Activated T-helper 1 cell treated with anti-CD3 and anti-CD28 coated beads, Interleukin-12 subunit alpha, Interleukin-12 subunit beta, Interleukin-2, Interleukin-4 antibody, amounts not matched to agents 30 ng/mL and 10 ng/mL and 1 ng/mL, durations not matched to agents 14 hours and 24 hours and 36 hours (primary cell): ENCODE measurements at regions of chr11 and their contacts with region 1.

Region 1: GRCh38 chr11:78139422-78140391 is at the start of gene ALG8:
- DNase-seq: peak; percentile 96
- H3K4me3 Mint-ChIP-seq: peak within 1 kb of the TSS; percentile 95
- H3K27ac Mint-ChIP-seq: peak within 1 kb of the TSS; percentile 90
- H3K4me1 Mint-ChIP-seq: peaks cover 43% of the 10 kb centered on the region
- H3K27me3 Mint-ChIP-seq: no peaks in the 10 kb centered on the region
- total RNA-seq, gene ALG8: 57.9 and 74.2 TPM in 2 replicates

Region 2: GRCh38 chr11:77637345-77638165 is 502.2 kb before region 1 on chr11 and contains the start of gene CLNS1A:
- intact Hi-C with region 1: loop called (anchors 5 kb)
- DNase-seq: peak; percentile 74
- H3K4me3 Mint-ChIP-seq: peak within 1 kb of the TSS; percentile 96
- H3K27ac Mint-ChIP-seq: peak within 1 kb of the TSS; percentile 95
- H3K4me1 Mint-ChIP-seq: peaks cover 29% of the 10 kb centered on the region
- H3K27me3 Mint-ChIP-seq: no peaks in the 10 kb centered on the region
- total RNA-seq, gene CLNS1A: 161 and 169 TPM in 2 replicates

Region 3: DNA sequence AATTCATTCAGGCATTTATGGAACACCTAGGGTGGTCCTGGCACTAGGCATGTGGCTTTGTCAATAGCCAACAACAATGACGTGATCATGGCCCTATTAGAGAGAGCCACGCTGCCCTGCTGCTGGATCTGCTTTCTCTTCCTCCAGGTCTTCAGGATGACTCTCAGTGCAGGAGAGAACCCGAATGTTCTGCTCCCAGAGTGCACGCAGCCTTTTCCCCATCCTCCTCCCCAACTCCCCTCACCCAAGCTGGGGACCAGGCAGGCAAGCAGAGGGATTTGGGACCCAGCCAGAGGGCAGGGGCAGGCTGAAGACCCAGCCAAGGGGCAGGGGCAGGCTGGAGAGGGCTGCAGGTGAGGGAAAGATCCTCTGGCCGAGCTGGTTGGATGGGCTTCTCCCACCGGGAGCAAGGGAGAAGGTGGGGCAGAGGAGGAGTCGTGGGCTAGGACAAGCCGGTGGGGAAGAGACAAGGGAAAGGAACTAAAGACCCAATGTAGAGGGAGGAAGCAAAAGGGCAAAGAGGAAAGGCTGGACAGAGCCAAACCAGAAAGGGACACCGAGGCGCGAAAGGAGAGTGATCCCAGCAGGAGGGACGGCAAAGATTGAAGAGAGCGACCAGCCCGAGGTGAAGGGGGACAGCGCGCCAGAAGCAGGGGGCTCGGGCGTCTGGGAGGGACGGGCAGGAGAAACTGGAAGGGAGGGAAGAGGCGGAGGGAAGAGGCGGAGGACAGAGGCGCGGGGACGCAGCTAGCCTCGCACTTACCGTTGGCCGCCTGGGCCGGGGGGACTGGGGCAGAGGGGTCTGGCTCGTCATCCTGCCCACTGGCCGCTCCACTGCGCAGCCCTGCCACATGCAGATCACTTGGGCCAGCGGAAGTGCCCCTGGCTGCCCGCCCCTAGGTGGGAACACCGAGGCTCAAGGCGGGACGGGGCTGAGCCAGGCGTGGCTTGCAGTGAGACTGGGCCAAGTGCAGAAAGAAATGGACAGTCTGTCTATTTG is 117.0 kb before region 1 on chr11 and contains the start of gene KCTD14:
- intact Hi-C with region 1: no loop called
- DNase-seq: no peak
- H3K4me3 Mint-ChIP-seq: no peak within 1 kb of the TSS
- H3K27ac Mint-ChIP-seq: no peak within 1 kb of the TSS
- H3K4me1 Mint-ChIP-seq: no peaks in the 10 kb centered on the region
- H3K27me3 Mint-ChIP-seq: peaks cover 19% of the 10 kb centered on the region
- total RNA-seq, gene KCTD14: 0.16 and 0.49 TPM in 2 replicates

Region 4: DNA sequence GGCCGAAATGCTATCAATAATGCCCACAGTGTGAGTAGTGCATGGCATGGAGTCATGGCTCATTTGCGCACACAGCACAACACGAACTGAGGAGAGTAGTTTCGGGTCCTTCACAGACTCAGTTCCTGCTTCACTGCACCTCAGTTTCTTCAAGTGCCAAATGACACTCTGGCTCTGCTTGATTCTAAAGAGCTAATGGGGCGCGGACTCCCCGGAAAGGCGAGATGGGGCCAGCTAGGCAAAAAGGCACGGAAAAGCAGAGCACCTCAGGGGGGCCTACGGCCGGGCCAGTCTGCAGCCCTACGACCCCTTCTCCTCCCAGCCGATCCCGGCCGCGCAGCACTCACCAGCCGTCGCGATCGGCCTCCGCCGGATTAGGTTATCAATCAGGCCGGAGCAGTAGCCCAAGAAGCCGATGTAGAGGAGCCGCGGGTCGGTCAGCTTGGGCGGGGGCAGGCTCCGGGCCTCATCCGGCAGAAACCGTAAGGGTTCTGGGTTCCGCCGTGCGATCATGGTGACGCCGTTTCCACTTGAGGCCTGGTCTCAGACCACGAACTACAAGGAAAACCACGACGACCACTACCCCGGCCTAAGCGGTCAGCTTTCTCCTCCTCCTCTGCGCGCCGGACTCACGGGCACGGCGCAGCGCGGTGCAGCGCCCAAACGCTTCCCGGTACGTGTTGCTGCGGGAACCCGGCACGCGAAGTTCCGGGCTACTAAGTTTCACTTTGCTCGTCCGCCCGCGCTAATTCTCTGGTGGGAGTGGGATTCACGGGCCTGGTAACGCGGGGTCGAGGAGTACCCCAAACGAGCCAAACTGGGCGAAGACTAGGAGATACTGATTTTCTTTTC is 60.2 kb before region 1 on chr11 and contains the start of gene NDUFC2:
- intact Hi-C with region 1: loop called (anchors 1 kb)
- DNase-seq: peak; percentile 62
- H3K4me3 Mint-ChIP-seq: peak within 1 kb of the TSS; percentile 95
- H3K27ac Mint-ChIP-seq: peak within 1 kb of the TSS; percentile 86
- H3K4me1 Mint-ChIP-seq: peaks cover 53% of the 10 kb centered on the region
- H3K27me3 Mint-ChIP-seq: no peaks in the 10 kb centered on the region
- total RNA-seq, gene NDUFC2: 208 and 220 TPM in 2 replicates

Region 5: GRCh38 chr11:78202733-78203167 is 63.0 kb after region 1 on chr11:
- intact Hi-C with region 1: loop called (anchors 1 kb)
- DNase-seq: peak; percentile 59
- H3K4me3 Mint-ChIP-seq: peak overlapping the region; percentile 80
- H3K27ac Mint-ChIP-seq: peak overlapping the region; percentile 96
- H3K4me1 Mint-ChIP-seq: peaks cover 39% of the 10 kb centered on the region
- H3K27me3 Mint-ChIP-seq: no peaks in the 10 kb centered on the region

Region 6: DNA sequence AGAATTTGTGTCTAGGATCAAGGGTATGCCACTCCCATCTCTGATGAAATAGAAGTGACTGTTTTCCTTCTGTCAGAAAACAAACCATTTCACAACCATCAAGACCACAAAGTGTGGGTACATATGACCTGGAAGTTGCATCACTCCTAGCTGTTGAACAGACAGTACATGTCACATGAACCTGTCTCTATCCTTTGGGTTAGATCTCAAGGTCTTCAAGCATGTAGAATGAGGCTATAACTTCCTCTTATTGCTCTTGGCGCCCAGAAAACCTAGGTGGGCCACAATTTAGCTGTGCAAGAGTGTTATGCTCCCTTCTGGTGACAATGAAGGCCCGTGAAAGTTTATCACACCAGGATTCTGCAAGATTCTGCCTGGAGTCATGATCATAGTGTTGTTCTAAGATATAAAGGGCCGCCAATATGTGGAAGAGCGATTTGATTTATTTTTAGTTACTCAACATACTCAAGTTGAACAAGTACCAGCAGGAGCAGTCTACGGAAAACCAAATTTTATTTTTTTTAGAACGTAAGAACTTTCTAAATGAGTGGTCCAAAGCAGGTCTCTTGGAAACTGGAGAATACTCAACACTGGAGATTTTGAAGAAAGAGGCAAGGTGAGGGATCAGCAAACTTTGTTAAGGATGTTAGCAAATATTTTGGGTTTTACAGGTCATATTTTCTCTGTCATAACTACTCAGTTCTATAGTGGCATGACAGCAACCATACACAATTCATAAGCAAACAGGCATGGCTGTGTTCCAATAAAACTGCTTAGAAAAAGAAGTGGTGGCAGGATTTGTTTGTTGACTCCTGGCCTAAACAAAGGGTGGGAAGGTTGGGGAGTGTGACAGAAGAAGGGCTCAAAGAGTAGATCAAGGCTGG is 150.8 kb after region 1 on chr11:
- intact Hi-C with region 1: loop called (anchors 5 kb)
- DNase-seq: peak; percentile 54
- H3K4me3 Mint-ChIP-seq: peak overlapping the region; percentile 73
- H3K27ac Mint-ChIP-seq: peak overlapping the region; percentile 92
- H3K4me1 Mint-ChIP-seq: peaks cover 68% of the 10 kb centered on the region
- H3K27me3 Mint-ChIP-seq: no peaks in the 10 kb centered on the region

Region 7: DNA sequence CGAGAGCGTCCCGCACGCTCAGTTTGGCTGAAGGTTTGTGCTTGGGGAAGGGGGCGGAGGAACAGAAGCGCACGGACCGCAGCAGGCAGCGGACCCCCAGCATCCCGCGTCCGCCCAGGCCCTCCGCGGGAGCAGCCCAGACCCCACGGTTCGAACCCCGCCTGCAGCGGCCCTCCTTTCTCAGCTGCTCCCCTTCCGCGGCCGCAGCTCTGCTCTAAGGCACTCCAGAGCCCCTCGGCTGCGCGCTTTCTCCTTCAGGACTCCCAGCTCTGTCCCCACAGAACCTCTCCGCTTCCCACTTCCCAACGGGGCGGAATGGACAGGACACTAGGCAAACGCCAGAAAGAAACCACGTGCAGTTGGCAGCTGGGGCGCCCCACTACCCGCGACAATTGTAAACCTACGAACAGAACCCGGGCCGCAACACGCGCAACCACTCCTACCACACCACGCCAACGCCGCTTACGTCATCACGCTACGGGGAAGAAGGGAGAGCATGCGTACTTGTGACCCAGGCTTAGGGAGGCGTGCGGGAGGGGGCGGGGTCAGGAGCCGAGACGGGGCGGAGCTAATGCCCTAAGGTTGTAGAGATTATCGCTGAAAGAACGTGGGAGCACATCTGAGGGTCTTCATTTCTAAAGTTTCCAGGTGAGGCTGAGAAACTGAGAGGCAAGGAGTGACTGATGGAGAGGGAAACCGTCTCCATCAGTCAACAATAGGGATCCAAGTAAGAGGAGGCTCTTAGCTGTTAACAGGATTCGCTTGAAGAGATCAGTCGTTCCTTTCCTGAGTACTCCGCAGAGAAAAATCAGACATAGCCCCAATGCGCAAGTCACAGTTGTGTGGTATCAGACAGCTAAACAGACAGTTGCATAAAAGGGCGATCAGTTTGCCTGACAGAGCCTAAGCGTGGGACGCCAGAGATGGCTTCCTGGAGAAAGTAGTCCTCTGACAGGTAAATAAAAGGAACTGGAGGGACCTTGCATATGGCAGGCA is 435.0 kb after region 1 on chr11 and contains the start of gene NARS2:
- intact Hi-C with region 1: loop called (anchors 1 kb)
- DNase-seq: peak; percentile 95
- H3K4me3 Mint-ChIP-seq: peak within 1 kb of the TSS; percentile 90
- H3K27ac Mint-ChIP-seq: peak within 1 kb of the TSS; percentile 86
- H3K4me1 Mint-ChIP-seq: peaks cover 40% of the 10 kb centered on the region
- H3K27me3 Mint-ChIP-seq: peaks cover 7% of the 10 kb centered on the region
- total RNA-seq, gene NARS2: 38.2 and 38.7 TPM in 2 replicates